AG04449 (cell line): ENCODE measurements at regions of chr10 and their contacts with region 1.

Region 1: DNA sequence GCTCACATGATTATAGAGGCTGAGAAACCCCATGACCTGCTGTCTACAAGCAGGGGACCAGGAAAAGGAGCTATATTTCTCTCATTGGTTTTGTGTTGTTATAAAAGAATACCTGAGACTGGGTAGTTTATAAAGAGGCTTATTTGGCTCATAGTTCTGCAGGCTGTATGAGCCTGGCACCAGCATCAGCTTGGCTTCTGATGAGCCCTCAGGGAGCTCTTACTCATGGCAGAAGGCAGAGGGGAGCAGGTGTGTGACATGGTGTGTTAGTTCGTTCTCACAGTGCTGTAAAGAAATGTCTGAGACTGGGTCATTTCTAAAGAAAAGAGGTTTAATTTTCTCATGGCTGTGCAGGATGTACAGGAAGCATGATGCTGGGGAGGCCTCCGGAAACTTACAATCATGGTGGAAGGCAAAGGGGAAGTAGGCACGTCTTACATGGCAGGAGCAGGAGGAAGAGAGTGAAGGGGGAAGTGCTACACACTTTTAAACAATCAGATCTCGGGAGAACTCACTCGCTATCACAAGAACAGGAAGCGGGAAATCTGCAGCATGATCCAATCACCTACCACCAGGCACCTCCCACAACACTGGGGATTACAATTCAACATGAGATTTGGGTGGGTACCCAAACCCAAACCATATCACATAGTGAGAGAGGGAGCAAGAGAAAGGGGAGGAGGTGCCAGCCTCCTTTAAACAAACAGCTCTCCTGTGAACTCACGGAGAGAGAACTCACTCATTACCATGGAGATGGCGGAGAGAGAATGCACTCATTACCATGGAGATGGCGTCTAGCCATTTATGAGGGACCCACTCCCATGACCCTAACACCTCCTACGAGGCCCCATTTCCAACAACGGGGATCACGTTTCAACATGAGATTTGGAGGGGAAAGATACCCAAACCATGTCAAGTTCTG is 133.4 kb downstream of the JCAD start:
- DNase-seq: no peak
- H3K4me3 ChIP-seq: no peak overlapping the region
- CTCF ChIP-seq: no peak

Region 2: DNA sequence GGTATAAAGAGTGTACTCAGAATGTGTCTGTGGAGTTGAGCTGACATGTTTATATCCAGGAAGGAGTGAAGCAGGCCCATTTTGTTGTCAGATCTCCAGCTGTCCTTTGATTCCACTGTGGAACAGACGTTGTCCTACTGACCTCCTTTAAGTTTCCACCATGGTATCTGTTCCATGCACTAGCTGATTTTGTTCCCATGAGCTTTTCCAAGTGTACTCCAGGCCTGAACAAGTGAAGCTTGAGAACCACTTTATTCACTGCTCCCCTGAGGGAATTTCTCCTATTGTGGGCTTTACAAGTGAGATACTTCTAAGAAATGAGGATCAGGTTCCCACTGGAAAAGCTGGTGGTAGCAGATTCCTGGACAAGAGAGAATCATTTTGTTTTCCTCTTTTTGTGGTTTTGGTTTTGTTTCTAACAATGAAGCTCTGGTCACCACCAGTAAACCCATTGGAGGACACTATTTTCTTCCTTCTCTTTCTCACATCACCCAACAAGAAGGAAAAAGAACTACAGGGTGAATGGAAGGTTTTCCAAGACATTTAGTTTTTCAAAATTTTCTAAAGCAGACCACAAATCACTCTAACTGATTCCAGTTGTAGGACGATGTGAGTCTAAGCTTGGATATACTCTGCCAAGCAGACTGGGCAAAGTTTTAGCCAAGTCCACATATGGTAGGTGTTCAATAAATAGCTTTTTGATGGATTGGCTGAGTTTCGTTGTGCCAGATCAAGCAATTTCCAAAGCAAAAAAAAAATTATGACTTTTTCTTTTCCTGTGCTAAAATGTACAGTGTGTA is 10.8 kb before region 1 on chr10:
- CTCF ChIA-PET with region 1: interaction called, 11 read pairs
- POLR2A ChIA-PET with region 1: no interaction called
- DNase-seq: no peak
- H3K4me3 ChIP-seq: no peak overlapping the region
- CTCF ChIP-seq: no peak